Dorsolateral prefrontal cortex (tissue), 120 donors: ENCODE measurements at regions of chr1 and their contacts with region 1.

Region 1: DNA sequence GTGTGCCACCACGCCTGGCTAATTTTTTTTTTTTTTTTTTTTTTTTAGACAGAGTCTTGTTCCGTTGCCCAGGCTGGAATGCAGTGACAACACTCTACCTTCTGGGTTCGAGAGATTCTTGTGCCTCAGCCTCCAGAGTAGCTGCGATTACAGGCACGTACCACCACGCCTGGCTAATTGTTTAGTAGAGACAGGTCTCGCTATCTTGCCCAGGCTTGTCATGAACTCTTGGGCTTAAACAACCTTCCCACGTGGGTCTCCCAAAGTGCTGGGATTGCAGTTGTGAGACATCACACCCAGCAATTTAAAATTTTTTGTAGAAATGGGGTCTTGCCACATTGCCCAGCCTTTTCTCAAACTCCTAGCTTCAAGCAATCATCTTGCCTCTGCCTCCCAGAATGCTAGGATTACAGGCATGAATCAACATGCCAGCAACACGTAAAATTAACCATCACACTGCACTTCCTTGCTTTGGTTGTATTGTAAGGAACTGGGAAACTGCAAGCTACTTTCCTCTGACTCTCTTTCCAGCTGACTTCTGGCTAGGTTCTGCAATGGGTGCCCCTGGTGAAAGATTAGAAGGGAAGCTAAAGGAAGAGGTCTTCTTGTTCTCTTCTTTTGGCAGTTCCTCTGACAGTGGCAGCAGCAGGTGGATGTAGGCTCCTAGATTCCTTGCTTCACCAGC is 13.9 kb upstream of the IL6R start:
- DNase-seq: no peak
- H3K4me3 ChIP-seq: no peak overlapping the region
- H3K27ac ChIP-seq: no peak overlapping the region
- H3K27me3 ChIP-seq: no peaks in the 10 kb centered on the region
- CTCF ChIP-seq: no peak

Region 2: DNA sequence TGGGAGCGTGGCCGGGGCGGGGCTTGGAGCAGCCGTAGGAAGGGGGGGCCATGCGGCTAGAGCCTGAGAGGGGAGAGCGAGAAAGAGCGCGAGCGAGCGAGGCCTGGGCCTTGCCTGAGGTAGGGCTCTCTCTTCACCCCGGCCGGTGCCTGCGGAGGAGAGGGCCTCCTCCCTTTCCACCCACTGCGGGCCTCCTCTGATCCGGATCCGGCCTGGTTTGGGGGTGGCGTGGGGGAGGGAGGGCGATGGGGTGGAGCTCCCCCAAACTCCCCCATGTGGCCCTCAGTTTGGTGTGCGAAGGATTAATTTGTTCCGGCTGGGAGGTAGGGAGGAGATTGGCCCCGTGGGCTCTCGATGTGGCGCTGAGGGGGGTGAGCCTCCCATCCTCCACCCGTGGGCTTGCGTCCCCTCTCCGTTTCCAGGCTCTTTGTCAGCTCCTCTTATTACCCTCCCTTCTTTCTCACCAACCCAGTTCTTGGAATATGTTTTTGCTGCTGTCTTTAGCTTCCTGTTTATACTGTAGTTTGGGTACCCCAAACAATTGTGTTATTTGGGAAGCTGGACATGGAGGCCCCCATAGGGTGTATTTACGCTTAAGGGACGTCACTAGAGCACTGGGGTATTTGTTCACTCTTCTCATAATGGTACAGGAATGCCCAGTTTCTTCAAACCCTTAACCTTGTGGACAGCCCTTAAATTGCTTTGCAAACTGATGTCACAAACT is 169.8 kb before region 1 on chr1:
- intact Hi-C with region 1: no loop called
- DNase-seq: peak; percentile 36 to 72 (median 55)
- H3K4me3 ChIP-seq: peak overlapping the region; percentile 69 to 100 (median 91)
- H3K27ac ChIP-seq: peak overlapping the region; percentile 89 to 100 (median 98)
- H3K27me3 ChIP-seq: no peaks in the 10 kb centered on the region
- CTCF ChIP-seq: no peak

Region 3: GRCh38 chr1:154520333-154520732 is 129.1 kb after region 1 on chr1:
- intact Hi-C with region 1: loop called in 1 of 2 experiments (anchors 10 kb)
- DNase-seq: no peak
- H3K4me3 ChIP-seq: no peak overlapping the region
- H3K27ac ChIP-seq: no peak overlapping the region
- H3K27me3 ChIP-seq: peaks cover 0 to 4% (median 0%) of the 10 kb centered on the region in 45 donors
- CTCF ChIP-seq: no peak